Ascending aorta (tissue), 2 donors: ENCODE measurements at regions of chr6 and their contacts with region 1.

Region 1: DNA sequence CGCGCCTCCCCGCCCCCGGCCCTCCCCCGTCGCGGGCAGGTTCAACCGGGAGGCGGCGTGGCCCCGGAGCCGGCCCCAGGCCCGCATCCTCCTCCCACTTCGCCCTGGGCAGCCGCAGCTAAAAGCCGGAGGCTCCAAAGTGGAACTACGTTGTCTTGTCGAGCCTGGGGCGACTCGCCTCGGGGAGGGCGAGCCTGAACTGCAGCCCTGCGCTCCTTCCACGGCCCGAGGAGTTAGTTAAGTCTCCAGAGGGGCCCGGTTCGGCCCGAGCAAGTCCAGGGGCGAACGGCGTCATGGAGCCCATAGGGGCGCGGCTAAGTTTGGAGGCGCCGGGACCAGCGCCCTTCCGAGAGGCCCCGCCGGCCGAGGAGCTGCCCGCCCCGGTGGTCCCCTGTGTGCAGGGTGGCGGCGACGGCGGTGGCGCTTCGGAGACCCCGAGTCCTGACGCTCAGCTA is at the start of gene PPP1R3G:
- DNase-seq: no peak
- H3K4me3 ChIP-seq: peak within 1 kb of the TSS; percentile 70 to 73
- H3K27ac ChIP-seq: peak within 1 kb of the TSS; percentile 71 to 79
- H3K4me1 ChIP-seq: peaks cover 0 to 7% of the 10 kb centered on the region in 2 donors
- H3K27me3 ChIP-seq: no peaks in the 10 kb centered on the region
- CTCF ChIP-seq: no peak
- total RNA-seq, gene PPP1R3G: 1.1 TPM

Region 2: GRCh38 chr6:5025911-5026819 is 59.1 kb before region 1 on chr6:
- intact Hi-C with region 1: loop called (anchors 5 kb)
- DNase-seq: peak in 1 of 2 donors; percentile 70
- H3K4me3 ChIP-seq: peak overlapping the region; percentile 66
- H3K27ac ChIP-seq: peak overlapping the region; percentile 72 to 84
- H3K4me1 ChIP-seq: peaks cover 0 to 4% of the 10 kb centered on the region in 2 donors
- H3K27me3 ChIP-seq: no peaks in the 10 kb centered on the region
- CTCF ChIP-seq: peak in 1 of 3 experiments; percentile 27

Region 3: DNA sequence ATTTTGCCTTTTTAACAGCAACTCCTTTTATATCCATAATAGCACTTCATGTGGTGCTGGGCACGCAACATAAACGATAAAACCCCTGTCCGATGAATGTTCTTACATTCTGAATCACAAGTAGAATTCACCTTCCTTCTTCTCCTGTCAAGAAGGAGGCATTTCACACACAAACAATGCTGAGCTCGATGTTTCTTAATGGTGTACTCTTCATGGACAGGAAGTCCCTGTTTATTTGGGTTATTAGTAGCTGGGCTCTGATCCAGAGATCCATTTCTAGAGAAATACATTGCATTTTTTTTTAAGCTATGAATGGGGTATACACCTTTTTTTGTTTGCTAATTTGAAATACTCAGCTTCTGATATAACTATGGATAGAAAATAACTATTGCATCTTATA is 82.3 kb after region 1 on chr6:
- intact Hi-C with region 1: no loop called
- DNase-seq: no peak
- H3K4me3 ChIP-seq: no peak overlapping the region
- H3K27ac ChIP-seq: no peak overlapping the region
- H3K4me1 ChIP-seq: no peaks in the 10 kb centered on the region
- H3K27me3 ChIP-seq: no peaks in the 10 kb centered on the region
- CTCF ChIP-seq: no peak

Region 4: GRCh38 chr6:5214570-5215052 is 129.4 kb after region 1 on chr6:
- intact Hi-C with region 1: loop called (anchors 5 kb)
- DNase-seq: peak in 1 of 2 donors; percentile 71
- H3K4me3 ChIP-seq: peak overlapping the region in 1 of 2 donors; percentile 36
- H3K27ac ChIP-seq: peak overlapping the region; percentile 3 to 56
- H3K4me1 ChIP-seq: peaks cover 6 to 17% of the 10 kb centered on the region in 2 donors
- H3K27me3 ChIP-seq: no peaks in the 10 kb centered on the region
- CTCF ChIP-seq: peak; percentile 57 to 87 (median 71)